ENCODE measurements at regions of chr7 and their contacts with region 1.

Region 1: GRCh38 chr7:191981-192649 is at the start of gene FAM20C:
- DNase-seq: peak; percentile 83 to 95
- H3K4me3 ChIP-seq: peak within 1 kb of the TSS; percentile 64 to 65
- H3K27ac ChIP-seq: peak within 1 kb of the TSS; percentile 83 to 89
- H3K4me1 ChIP-seq: peaks cover 0 to 48% (median 40%) of the 10 kb centered on the region in 4 donors
- H3K27me3 ChIP-seq: no peaks in the 10 kb centered on the region
- CTCF ChIP-seq: no peak

Region 2: GRCh38 chr7:148932-149855 is 42.9 kb before region 1 on chr7:
- intact Hi-C with region 1: loop called (anchors 5 kb)
- DNase-seq: peak; percentile 98 to 99
- H3K4me3 ChIP-seq: peak overlapping the region; percentile 51 to 66
- H3K27ac ChIP-seq: peak overlapping the region; percentile 92 to 94
- H3K4me1 ChIP-seq: peaks cover 0 to 28% (median 12%) of the 10 kb centered on the region in 4 donors
- H3K27me3 ChIP-seq: no peaks in the 10 kb centered on the region
- CTCF ChIP-seq: no peak

Region 3: GRCh38 chr7:234655-235578 is 42.8 kb after region 1 on chr7:
- intact Hi-C with region 1: loop called (anchors 5 kb)
- DNase-seq: peak; percentile 75 to 89
- H3K4me3 ChIP-seq: peak overlapping the region; percentile 28 to 43
- H3K27ac ChIP-seq: peak overlapping the region; percentile 88 to 92
- H3K4me1 ChIP-seq: peaks cover 9 to 66% (median 65%) of the 10 kb centered on the region in 4 donors
- H3K27me3 ChIP-seq: no peaks in the 10 kb centered on the region
- CTCF ChIP-seq: no peak

Region 4: GRCh38 chr7:503575-504111 is 311.5 kb after region 1 on chr7:
- intact Hi-C with region 1: no loop called
- DNase-seq: peak in 1 of 2 donors; percentile 80
- H3K4me3 ChIP-seq: no peak overlapping the region
- H3K27ac ChIP-seq: peak overlapping the region; percentile 31 to 71
- H3K4me1 ChIP-seq: peaks cover 0 to 82% (median 37%) of the 10 kb centered on the region in 4 donors
- H3K27me3 ChIP-seq: no peaks in the 10 kb centered on the region
- CTCF ChIP-seq: no peak

Region 5: DNA sequence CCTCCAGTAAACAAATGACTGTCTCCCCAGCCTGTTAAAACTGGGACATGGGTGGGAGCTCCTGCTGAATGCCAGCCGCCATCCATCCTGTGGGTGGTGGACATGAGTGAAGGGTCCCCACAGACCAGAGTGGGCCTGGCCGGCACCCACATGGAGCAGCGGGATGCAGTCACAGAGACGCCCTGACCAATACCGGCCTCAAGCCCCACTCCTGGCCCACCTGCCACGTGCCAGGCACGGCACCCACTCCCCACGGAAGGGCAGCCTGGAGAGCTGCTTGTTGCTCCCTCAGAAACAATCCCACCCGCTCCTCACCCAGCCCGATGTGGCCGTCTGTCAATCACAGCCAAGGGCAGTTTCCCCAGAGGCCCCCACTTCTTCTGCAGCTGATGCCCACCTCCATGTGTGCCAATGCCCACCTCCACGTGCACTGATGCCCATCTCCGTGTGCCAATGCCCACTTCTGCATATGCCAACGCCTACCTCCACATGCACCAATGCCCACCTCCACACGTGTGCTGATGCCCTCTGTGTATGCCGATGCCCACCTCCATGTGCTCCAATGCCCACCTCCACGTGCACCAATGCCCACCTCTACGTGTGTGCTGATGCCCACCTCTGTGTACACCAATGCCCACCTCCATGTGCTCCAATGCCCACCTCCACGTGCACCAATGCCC is 491.6 kb after region 1 on chr7:
- intact Hi-C with region 1: no loop called
- DNase-seq: peak in 1 of 2 donors; percentile 60
- H3K4me3 ChIP-seq: no peak overlapping the region
- H3K27ac ChIP-seq: no peak overlapping the region
- H3K4me1 ChIP-seq: no peaks in the 10 kb centered on the region
- H3K27me3 ChIP-seq: no peaks in the 10 kb centered on the region
- CTCF ChIP-seq: no peak